AG04450 (cell line): ENCODE measurements at regions of chr13 and their contacts with region 1.

Region 1: GRCh38 chr13:66703597-66703996 is 526.5 kb downstream of the PCDH9 start:
- DNase-seq: no peak
- H3K4me3 ChIP-seq: no peak overlapping the region
- H3K27ac ChIP-seq: no peak overlapping the region
- H3K27me3 ChIP-seq: no peaks in the 10 kb centered on the region
- CTCF ChIP-seq: no peak

Region 2: DNA sequence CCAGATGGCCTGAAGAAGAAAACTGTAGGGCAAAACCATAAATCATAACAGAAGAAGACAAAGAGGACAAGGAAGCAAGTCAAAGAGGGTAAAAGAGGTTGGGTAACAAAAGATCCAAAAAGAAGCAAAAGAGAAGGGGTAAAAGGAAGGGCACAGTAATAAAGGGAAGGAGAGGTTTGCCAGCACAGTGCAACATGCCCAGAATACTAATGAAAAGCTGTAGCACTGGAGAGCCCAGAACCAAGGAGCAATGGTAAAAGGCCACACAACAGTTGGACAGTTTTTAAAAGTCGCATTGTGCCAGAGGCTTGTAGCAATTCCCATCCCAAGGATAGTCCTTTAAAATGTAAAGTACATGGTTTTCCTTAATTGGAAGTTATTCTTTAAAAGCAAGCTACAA is 20.0 kb after region 1 on chr13:
- CTCF ChIA-PET with region 1: no interaction called
- POLR2A ChIA-PET with region 1: no interaction called
- DNase-seq: no peak
- H3K4me3 ChIP-seq: no peak overlapping the region
- H3K27ac ChIP-seq: no peak overlapping the region
- H3K27me3 ChIP-seq: no peaks in the 10 kb centered on the region
- CTCF ChIP-seq: no peak

Region 3: DNA sequence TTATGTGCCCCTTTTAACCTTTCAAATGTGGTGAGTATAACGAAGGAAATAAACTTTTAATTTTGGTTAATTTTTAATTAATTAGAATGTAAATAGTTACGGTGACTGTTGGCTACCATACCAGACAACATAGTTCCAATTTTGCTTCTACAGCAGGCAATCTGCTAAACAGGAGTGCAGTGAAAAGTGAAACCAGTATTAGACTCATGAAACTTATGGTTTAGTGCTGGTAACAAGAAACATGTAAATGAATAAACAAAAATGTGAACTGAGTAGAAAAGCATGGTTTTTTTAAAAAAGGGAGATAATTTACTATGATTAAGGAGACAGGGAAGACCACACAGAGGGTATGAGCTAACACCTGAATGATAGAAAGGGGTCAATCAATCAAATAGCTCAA is 48.1 kb after region 1 on chr13:
- CTCF ChIA-PET with region 1: no interaction called
- POLR2A ChIA-PET with region 1: interaction called, 13 read pairs
- DNase-seq: no peak
- H3K4me3 ChIP-seq: no peak overlapping the region
- H3K27ac ChIP-seq: no peak overlapping the region
- H3K27me3 ChIP-seq: no peaks in the 10 kb centered on the region
- CTCF ChIP-seq: no peak